Tibial artery (tissue), 4 donors: ENCODE measurements at regions of chr3 and their contacts with region 1.

Region 1: GRCh38 chr3:177359593-177360357 is 162.5 kb upstream of the TBL1XR1 start:
- DNase-seq: peak; percentile 93 to 97
- H3K4me3 ChIP-seq: peak overlapping the region; percentile 31 to 49
- H3K27ac ChIP-seq: peak overlapping the region; percentile 74 to 77
- H3K4me1 ChIP-seq: peaks cover 3 to 62% (median 43%) of the 10 kb centered on the region in 4 donors
- H3K27me3 ChIP-seq: no peaks in the 10 kb centered on the region
- CTCF ChIP-seq: peak in 1 of 2 experiments; percentile 18

Region 2: DNA sequence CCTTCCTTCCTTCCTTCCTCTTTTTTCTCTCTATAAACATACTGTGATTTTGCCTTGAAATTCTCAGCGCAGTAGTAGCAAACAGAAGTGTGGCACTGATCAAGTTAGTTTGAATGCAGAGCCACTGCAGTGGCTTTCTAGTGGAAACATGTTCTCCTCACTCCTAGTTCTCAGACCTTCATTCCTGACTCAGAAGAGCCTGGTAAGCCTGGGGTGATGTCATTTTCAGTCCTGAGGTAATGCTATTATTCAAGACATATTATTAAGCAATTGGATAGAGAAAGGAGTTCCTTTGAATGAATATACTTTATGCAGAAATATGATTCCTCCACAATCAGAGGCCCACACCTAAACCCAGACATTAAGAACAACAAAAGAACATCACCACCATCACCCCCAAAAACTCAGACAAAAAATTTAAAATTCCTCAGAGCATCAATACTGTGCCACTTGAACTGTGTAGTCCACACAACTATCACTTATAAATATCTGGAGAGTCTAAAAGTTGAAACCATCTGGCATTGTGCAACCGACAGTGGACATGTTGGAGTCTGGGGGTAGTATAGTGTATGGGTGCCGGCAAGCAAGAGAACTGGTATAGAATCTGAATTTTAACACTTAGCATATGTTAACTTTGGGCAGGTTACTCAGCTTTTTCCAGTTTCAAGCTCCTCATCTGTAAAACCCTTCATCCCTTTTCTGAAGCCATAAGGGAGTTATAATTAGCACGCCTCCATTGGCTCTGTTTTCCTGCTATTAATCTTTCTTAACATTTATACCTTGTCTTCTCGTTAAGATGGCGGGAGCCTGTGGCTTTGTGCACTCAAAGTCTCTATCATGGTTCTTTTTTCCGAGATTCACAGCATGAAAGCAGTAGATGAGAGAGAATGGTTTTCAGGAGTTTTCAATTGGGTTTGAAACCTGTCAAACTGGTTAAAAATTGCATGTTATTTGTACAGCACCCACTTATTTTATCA is 93.0 kb after region 1 on chr3:
- intact Hi-C with region 1: loop called (anchors 10 kb)
- DNase-seq: no peak
- H3K4me3 ChIP-seq: no peak overlapping the region
- H3K27ac ChIP-seq: peak overlapping the region; percentile 21 to 53
- H3K4me1 ChIP-seq: peaks cover 0 to 13% (median 5%) of the 10 kb centered on the region in 4 donors
- H3K27me3 ChIP-seq: no peaks in the 10 kb centered on the region
- CTCF ChIP-seq: no peak

Region 3: GRCh38 chr3:178318941-178319816 is 959.4 kb after region 1 on chr3:
- intact Hi-C with region 1: loop called (anchors 10 kb)
- DNase-seq: no peak
- H3K4me3 ChIP-seq: no peak overlapping the region
- H3K27ac ChIP-seq: no peak overlapping the region
- H3K4me1 ChIP-seq: peaks cover 0 to 30% (median 12%) of the 10 kb centered on the region in 4 donors
- H3K27me3 ChIP-seq: no peaks in the 10 kb centered on the region
- CTCF ChIP-seq: no peak